Activated T-helper 2 cell treated with anti-CD3 and anti-CD28 coated beads, Interferon-gamma antibody, Interleukin-2, Interleukin-4, amounts not matched to agents 10 μg/mL and 5 μg/mL and 100 μg/mL, durations not matched to agents 14 hours and 24 hours and 36 hours (primary cell): ENCODE measurements at regions of chr9 and their contacts with region 1.

Region 1: GRCh38 chr9:76018235-76018634 is 127.8 kb downstream of the PCSK5 start:
- DNase-seq: no peak
- H3K4me3 Mint-ChIP-seq: no peak overlapping the region
- H3K27ac Mint-ChIP-seq: no peak overlapping the region
- H3K4me1 Mint-ChIP-seq: peaks cover 50% of the 10 kb centered on the region
- H3K27me3 Mint-ChIP-seq: peaks cover 2% of the 10 kb centered on the region

Region 2: GRCh38 chr9:75880618-75881017 is 137.6 kb before region 1 on chr9:
- intact Hi-C with region 1: no loop called
- DNase-seq: no peak
- H3K4me3 Mint-ChIP-seq: no peak overlapping the region
- H3K27ac Mint-ChIP-seq: no peak overlapping the region
- H3K4me1 Mint-ChIP-seq: no peaks in the 10 kb centered on the region
- H3K27me3 Mint-ChIP-seq: peaks cover 13% of the 10 kb centered on the region

Region 3: GRCh38 chr9:75909776-75910175 is 108.5 kb before region 1 on chr9:
- intact Hi-C with region 1: no loop called
- DNase-seq: no peak
- H3K4me3 Mint-ChIP-seq: no peak overlapping the region
- H3K27ac Mint-ChIP-seq: no peak overlapping the region
- H3K4me1 Mint-ChIP-seq: peaks cover 1% of the 10 kb centered on the region
- H3K27me3 Mint-ChIP-seq: no peaks in the 10 kb centered on the region

Region 4: DNA sequence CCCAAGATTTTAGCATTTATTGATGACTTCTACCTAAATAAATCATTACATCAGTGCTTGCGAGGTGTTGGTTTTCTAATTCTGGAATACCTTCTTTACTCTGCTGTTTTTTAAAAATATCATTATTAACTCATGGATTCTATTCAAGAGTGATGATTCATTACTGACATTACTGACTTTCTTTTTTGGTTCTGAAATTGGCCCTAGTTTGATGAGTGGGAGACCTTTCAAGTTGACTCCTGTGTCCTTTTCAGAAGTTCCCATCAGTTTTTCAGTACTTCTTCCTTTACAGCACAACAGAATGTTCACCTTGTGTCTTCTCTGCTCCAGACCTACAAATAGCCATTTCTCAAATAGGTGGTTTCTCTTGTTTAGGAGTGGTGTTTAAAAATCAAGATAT is 13.7 kb before region 1 on chr9:
- intact Hi-C with region 1: loop called (anchors 2 kb)
- DNase-seq: no peak
- H3K4me3 Mint-ChIP-seq: no peak overlapping the region
- H3K27ac Mint-ChIP-seq: peak overlapping the region; percentile 40
- H3K4me1 Mint-ChIP-seq: peaks cover 21% of the 10 kb centered on the region
- H3K27me3 Mint-ChIP-seq: peaks cover 7% of the 10 kb centered on the region

Region 5: GRCh38 chr9:76302947-76303940 is 285.0 kb after region 1 on chr9:
- intact Hi-C with region 1: loop called (anchors 10 kb)
- DNase-seq: no peak
- H3K4me3 Mint-ChIP-seq: no peak overlapping the region
- H3K27ac Mint-ChIP-seq: no peak overlapping the region
- H3K4me1 Mint-ChIP-seq: no peaks in the 10 kb centered on the region
- H3K27me3 Mint-ChIP-seq: no peaks in the 10 kb centered on the region